Motor neuron (in vitro differentiated cells): ENCODE measurements at regions of chr16 and their contacts with region 1.

Region 1: DNA sequence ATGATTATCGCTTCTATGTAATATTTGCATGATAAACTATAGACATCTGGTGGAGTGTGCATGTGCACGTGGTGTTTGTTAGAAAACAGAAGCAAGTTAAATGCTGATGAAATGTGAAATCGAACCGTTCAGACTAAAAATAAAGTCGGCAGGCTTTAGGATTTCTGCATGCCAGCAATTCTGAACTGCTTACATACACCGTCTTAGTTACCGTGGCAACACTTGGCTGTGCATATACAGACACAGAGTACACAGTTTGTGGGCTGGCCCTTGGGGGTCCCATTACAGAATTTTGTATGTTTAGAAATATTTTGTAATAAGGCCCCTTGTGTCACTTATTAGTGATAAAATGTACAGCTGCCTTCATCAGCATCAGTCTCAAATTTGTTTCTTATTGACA is 605.5 kb downstream of the RBFOX1 start:
- ATAC-seq: peak in 3 of 8 experiments; percentile 30 to 84 (median 76)
- H3K4me3 ChIP-seq: no peak overlapping the region
- H3K27ac ChIP-seq: no peak overlapping the region
- H3K4me1 ChIP-seq: peaks cover 0 to 10% of the 10 kb centered on the region in 2 donors

Region 2: DNA sequence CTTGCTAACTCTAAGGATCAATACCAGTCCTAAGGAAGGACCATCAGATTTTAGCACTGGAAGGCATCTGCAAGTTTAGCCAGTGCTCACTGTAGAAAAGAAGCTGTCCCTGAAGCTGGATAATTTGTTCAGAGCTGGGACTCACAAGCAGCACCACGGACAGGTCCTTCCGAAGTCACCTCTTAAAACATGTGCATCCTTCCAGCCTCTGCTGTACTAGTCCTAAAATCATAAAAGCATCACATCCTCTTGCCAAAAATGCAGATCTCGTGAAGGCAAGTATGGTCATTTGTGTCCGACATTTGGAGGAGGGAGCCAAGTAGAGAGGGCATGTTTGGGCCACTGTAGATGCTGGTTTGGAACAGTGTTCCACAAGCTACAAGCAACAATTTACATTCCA is 98.6 kb before region 1 on chr16:
- in situ Hi-C with region 1: loop called in 1 of 9 experiments (anchors 25 kb)
- ATAC-seq: no peak
- H3K4me3 ChIP-seq: no peak overlapping the region
- H3K27ac ChIP-seq: no peak overlapping the region
- H3K4me1 ChIP-seq: peaks cover 0 to 15% of the 10 kb centered on the region in 2 donors